ENCODE measurements at regions of chr6 and their contacts with region 1.

Region 1: DNA sequence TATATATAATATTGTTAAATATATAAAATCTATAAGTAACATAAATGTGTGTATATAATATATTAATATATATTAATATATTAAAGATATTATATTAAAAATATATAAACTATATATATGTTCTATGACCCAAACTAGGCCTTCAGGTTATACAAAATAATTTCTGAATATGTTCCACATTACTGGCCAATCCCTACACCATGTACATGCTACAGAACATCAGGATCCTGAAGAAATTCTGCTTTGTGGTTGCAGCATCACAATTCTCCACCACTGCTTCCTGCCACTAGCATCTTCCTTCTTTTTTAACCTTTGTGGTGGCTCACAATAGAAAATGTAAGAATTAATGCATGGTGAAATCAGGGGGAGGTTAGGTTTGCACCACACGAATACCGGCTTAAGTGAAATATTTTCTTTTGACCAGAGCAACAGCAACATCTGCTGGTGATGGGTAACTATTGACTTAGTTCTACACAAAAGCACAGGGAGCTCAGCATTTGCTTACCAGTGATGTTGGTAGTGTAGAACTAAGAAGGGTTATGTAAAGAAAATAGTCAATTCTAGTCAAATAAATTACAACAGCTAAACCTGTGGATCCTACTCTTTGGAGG is 280.6 kb downstream of the SYNE1 start:
- DNase-seq: peak in 2 of 9 experiments; percentile 39 to 56
- ATAC-seq: peak; percentile 56
- H3K4me3 ChIP-seq: no peak overlapping the region
- H3K4me3 Mint-ChIP-seq: no peak overlapping the region
- H3K27ac ChIP-seq: no peak overlapping the region
- H3K27ac Mint-ChIP-seq: no peak overlapping the region
- H3K4me1 ChIP-seq: no peaks in the 10 kb centered on the region
- H3K4me1 Mint-ChIP-seq: peaks cover 3% of the 10 kb centered on the region
- H3K27me3 ChIP-seq: no peaks in the 10 kb centered on the region
- H3K27me3 Mint-ChIP-seq: no peaks in the 10 kb centered on the region
- CTCF ChIP-seq: peak; percentile 46

Region 2: GRCh38 chr6:151675746-151676416 is 680.7 kb before region 1 on chr6:
- CTCF ChIA-PET with region 1: interaction called, 3 read pairs
- POLR2A ChIA-PET with region 1: no interaction called
- intact Hi-C with region 1: loop called in 1 of 2 experiments (anchors 5 kb)
- DNase-seq: peak; percentile 2 to 68 (median 29)
- ATAC-seq: peak; percentile 75
- H3K4me3 ChIP-seq: no peak overlapping the region
- H3K4me3 Mint-ChIP-seq: no peak overlapping the region
- H3K27ac ChIP-seq: no peak overlapping the region
- H3K27ac Mint-ChIP-seq: no peak overlapping the region
- H3K4me1 ChIP-seq: no peaks in the 10 kb centered on the region
- H3K4me1 Mint-ChIP-seq: no peaks in the 10 kb centered on the region
- H3K27me3 ChIP-seq: no peaks in the 10 kb centered on the region
- H3K27me3 Mint-ChIP-seq: peaks cover 2% of the 10 kb centered on the region
- CTCF ChIP-seq: peak; percentile 80

Region 3: GRCh38 chr6:151765444-151765886 is 591.1 kb before region 1 on chr6:
- CTCF ChIA-PET with region 1: no interaction called
- POLR2A ChIA-PET with region 1: no interaction called
- intact Hi-C with region 1: loop called in 1 of 2 experiments (anchors 5 kb)
- DNase-seq: peak in 5 of 9 experiments; percentile 3 to 63 (median 16)
- ATAC-seq: peak; percentile 51
- H3K4me3 ChIP-seq: no peak overlapping the region
- H3K4me3 Mint-ChIP-seq: no peak overlapping the region
- H3K27ac ChIP-seq: no peak overlapping the region
- H3K27ac Mint-ChIP-seq: no peak overlapping the region
- H3K4me1 ChIP-seq: no peaks in the 10 kb centered on the region
- H3K4me1 Mint-ChIP-seq: peaks cover 5% of the 10 kb centered on the region
- H3K27me3 ChIP-seq: no peaks in the 10 kb centered on the region
- H3K27me3 Mint-ChIP-seq: peaks cover 6% of the 10 kb centered on the region
- CTCF ChIP-seq: peak; percentile 59

Region 4: DNA sequence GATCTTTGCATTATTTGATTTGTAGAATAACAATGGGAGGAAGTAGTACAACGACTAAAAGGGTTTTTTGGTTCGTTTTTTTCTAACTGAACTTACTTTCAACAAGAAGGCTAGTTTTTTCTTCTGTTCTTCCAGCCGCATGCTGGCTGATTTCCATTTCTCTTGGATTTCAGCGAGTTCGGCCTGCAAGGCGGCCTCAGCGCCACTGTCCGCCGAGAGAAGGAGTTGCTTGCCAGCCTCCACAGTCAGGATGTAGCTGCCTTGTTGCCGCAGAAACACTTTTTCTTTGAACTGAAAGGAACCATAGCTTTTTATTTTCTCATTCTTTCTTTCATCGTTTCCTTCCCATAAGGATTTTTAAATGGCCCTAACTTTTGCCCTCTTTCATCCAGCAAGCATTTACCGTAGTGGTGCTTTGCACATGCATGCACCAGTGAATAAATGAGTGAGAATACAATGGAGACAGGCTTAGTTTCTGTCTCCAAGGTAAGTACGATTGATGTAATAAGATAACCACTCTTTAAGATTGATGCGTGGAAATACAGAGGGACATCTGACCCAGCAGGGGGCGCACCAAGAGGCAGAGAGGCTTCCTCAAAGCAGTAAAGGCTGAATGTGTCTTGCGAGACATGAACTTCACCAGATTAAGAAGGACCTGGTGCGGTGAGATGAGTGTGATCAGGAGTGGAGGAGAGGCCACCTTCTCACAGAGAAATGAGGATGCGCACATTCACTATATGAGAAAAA is 150.3 kb before region 1 on chr6:
- CTCF ChIA-PET with region 1: no interaction called
- POLR2A ChIA-PET with region 1: no interaction called
- intact Hi-C with region 1: loop called (anchors 1 to 10 kb)
- DNase-seq: peak in 7 of 9 experiments; percentile 9 to 65 (median 50)
- ATAC-seq: peak; percentile 49
- H3K4me3 ChIP-seq: no peak overlapping the region
- H3K4me3 Mint-ChIP-seq: no peak overlapping the region
- H3K27ac ChIP-seq: no peak overlapping the region
- H3K27ac Mint-ChIP-seq: peak overlapping the region; percentile 3
- H3K4me1 ChIP-seq: no peaks in the 10 kb centered on the region
- H3K4me1 Mint-ChIP-seq: peaks cover 6% of the 10 kb centered on the region
- H3K27me3 ChIP-seq: no peaks in the 10 kb centered on the region
- H3K27me3 Mint-ChIP-seq: no peaks in the 10 kb centered on the region
- CTCF ChIP-seq: peak; percentile 51

Region 5: GRCh38 chr6:152329638-152330448 is 26.7 kb before region 1 on chr6:
- CTCF ChIA-PET with region 1: no interaction called
- POLR2A ChIA-PET with region 1: no interaction called
- intact Hi-C with region 1: no loop called
- DNase-seq: no peak
- ATAC-seq: no peak
- H3K4me3 ChIP-seq: no peak overlapping the region
- H3K4me3 Mint-ChIP-seq: no peak overlapping the region
- H3K27ac ChIP-seq: no peak overlapping the region
- H3K27ac Mint-ChIP-seq: no peak overlapping the region
- H3K4me1 ChIP-seq: no peaks in the 10 kb centered on the region
- H3K4me1 Mint-ChIP-seq: no peaks in the 10 kb centered on the region
- H3K27me3 ChIP-seq: no peaks in the 10 kb centered on the region
- H3K27me3 Mint-ChIP-seq: no peaks in the 10 kb centered on the region
- CTCF ChIP-seq: no peak